Heart right ventricle (tissue), 16 donors: ENCODE measurements at regions of chr10 and their contacts with region 1.

Region 1: DNA sequence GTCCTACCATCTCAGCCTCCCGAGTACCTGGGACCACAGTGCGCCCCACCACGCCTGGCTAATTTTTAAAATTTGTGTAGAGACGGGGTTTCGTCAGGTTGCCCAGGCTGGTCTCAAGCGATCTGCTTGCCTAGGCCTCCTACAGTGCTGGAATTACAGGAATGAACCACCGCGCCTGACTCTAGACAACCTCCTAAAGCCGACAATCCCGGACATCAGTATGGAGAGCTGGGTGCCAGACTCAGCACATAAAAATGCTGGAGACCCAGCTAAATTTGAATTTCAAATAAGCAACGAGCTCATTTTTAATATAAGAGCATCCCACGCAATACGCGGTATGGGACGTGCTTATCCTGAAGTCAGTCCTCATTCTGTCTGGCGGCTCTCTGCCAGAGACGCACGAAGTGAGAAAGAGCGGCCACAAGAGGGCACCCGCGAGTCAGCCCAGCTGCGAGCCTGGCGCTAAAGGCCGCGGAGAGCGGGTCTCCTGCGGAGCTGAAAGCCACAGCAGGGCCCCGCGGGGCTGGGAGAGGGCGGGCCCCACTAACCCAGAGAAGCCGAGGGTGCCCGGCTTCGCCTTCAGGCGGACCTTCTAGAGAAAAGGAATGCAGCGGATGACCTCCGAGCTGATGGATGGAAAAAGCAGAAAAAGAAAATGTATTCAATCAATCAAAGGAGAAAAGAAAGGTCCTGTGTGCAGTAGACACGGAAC is 7.0 kb downstream of the CALY start:
- DNase-seq: peak; percentile 82 to 88
- ATAC-seq: peak; percentile 70 to 91 (median 87)
- H3K4me3 ChIP-seq: peak overlapping the region in 6 of 10 donors; percentile 10 to 39 (median 23)
- H3K27ac ChIP-seq: no peak overlapping the region
- H3K4me1 ChIP-seq: peaks cover 5 to 24% (median 15%) of the 10 kb centered on the region in 9 donors
- H3K27me3 ChIP-seq: peaks cover 31 to 82% (median 81%) of the 10 kb centered on the region in 7 donors
- CTCF ChIP-seq: peak; percentile 91 to 99 (median 96)

Region 2: GRCh38 chr10:133110133-133110532 is 219.5 kb before region 1 on chr10:
- intact Hi-C with region 1: no loop called
- DNase-seq: peak in 1 of 2 donors; percentile 13
- ATAC-seq: peak; percentile 44 to 95 (median 75)
- H3K4me3 ChIP-seq: no peak overlapping the region
- H3K27ac ChIP-seq: peak overlapping the region in 1 of 10 donors; percentile 50
- H3K4me1 ChIP-seq: peaks cover 0 to 15% (median 0%) of the 10 kb centered on the region in 9 donors
- H3K27me3 ChIP-seq: peaks cover 0 to 8% (median 0%) of the 10 kb centered on the region in 7 donors
- CTCF ChIP-seq: no peak

Region 3: GRCh38 chr10:133186416-133187090 is 143.1 kb before region 1 on chr10:
- intact Hi-C with region 1: no loop called
- DNase-seq: no peak
- ATAC-seq: no peak
- H3K4me3 ChIP-seq: no peak overlapping the region
- H3K27ac ChIP-seq: no peak overlapping the region
- H3K4me1 ChIP-seq: no peaks in the 10 kb centered on the region
- H3K27me3 ChIP-seq: peaks cover 0 to 44% (median 28%) of the 10 kb centered on the region in 7 donors
- CTCF ChIP-seq: no peak

Region 4: DNA sequence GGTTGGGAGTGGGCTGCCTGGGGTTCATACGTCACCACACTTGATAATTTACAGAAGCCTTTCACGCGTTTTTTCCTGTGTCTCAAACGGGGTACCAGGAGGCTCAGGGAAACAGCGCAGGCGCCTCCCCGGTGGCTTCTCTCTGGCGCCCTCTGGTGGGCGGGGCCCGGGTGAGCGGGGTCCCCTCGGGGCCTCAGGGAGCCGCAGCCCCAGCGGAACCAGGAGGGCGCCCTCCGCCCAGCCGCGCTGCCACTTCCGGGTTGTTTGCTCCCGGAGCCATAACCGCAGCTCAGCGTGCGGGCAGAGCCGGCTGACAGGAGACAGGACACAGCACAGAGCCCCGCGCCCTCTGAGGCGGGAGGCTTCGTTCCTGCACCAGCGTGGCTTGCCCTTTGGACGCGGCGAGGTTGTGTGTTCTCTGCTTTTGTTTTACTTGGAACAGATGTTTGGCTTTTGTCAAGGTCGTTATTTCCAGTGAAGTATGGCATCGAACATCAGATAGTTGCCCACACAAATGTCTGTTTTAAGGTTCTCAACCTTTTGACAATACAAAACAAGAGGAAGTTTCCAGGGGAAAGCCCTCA is 190.6 kb after region 1 on chr10:
- intact Hi-C with region 1: loop called in 8 of 10 experiments (anchors 5 to 10 kb)
- DNase-seq: peak; percentile 64 to 87
- ATAC-seq: peak; percentile 88 to 99 (median 96)
- H3K4me3 ChIP-seq: peak overlapping the region in 8 of 10 donors; percentile 21 to 57 (median 50)
- H3K27ac ChIP-seq: no peak overlapping the region
- H3K4me1 ChIP-seq: peaks cover 0 to 11% (median 7%) of the 10 kb centered on the region in 9 donors
- H3K27me3 ChIP-seq: peaks cover 0 to 24% (median 0%) of the 10 kb centered on the region in 7 donors
- CTCF ChIP-seq: peak; percentile 75 to 96 (median 89)

Region 5: GRCh38 chr10:133608855-133609254 is 279.2 kb after region 1 on chr10:
- intact Hi-C with region 1: loop called in 4 of 10 experiments (anchors 5 kb)
- DNase-seq: no peak
- ATAC-seq: peak in 1 of 8 donors; percentile 33
- H3K4me3 ChIP-seq: no peak overlapping the region
- H3K27ac ChIP-seq: no peak overlapping the region
- H3K4me1 ChIP-seq: no peaks in the 10 kb centered on the region
- H3K27me3 ChIP-seq: peaks cover 0 to 79% (median 47%) of the 10 kb centered on the region in 7 donors
- CTCF ChIP-seq: peak; percentile 7 to 63 (median 56)